HepG2 (cell line): ENCODE measurements at regions of chr3 and their contacts with region 1.

Region 1: GRCh38 chr3:123791417-123791816 is 92.7 kb downstream of the MYLK start:
- DNase-seq: no peak
- ATAC-seq: no peak
- H3K4me3 ChIP-seq: no peak overlapping the region
- H3K27ac ChIP-seq: no peak overlapping the region
- H3K4me1 ChIP-seq: peaks cover 37% of the 10 kb centered on the region
- H3K27me3 ChIP-seq: no peaks in the 10 kb centered on the region
- CTCF ChIP-seq: no peak
- EP300 ChIP-seq: no peak
- POLR2A ChIP-seq: no peak
- RAD21 ChIP-seq: no peak

Region 2: DNA sequence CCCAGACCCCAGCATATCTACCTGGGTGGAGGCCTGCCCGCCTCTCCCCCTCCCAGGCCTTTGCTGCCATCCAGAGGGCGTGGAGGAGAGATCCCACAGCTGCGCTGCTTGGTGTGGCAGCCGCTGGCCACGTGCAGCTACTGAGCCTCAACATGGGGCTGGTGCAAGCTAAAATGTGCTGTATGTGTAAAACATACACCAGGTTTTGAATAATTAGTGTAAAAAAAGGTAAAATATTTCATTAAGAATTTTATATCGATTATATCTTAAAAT is 493.9 kb before region 1 on chr3:
- CTCF ChIA-PET with region 1: no interaction called
- POLR2A ChIA-PET with region 1: no interaction called
- in situ Hi-C with region 1: no loop called
- intact Hi-C with region 1: no loop called
- DNase-seq: no peak
- ATAC-seq: peak; percentile 27; the same call in 1 of the 3 replicates
- H3K4me3 ChIP-seq: no peak overlapping the region
- H3K27ac ChIP-seq: no peak overlapping the region
- H3K4me1 ChIP-seq: no peaks in the 10 kb centered on the region
- H3K27me3 ChIP-seq: peaks cover 4 to 30% of the 10 kb centered on the region in 2 experiments; a peak in 3 of 5 replicates
- CTCF ChIP-seq: peak; percentile 65
- EP300 ChIP-seq: no peak
- POLR2A ChIP-seq: no peak
- RAD21 ChIP-seq: no peak

Region 3: GRCh38 chr3:123584988-123585937 is 206.2 kb before region 1 on chr3 and contains the start of gene HACD2:
- CTCF ChIA-PET with region 1: no interaction called
- POLR2A ChIA-PET with region 1: no interaction called
- in situ Hi-C with region 1: no loop called
- intact Hi-C with region 1: no loop called
- DNase-seq: peak; percentile 94
- ATAC-seq: peak; percentile 95
- H3K4me3 ChIP-seq: peak within 1 kb of the TSS; percentile 89 to 98 (median 91)
- H3K27ac ChIP-seq: peak within 1 kb of the TSS; percentile 97
- H3K4me1 ChIP-seq: peaks cover 45% of the 10 kb centered on the region
- H3K27me3 ChIP-seq: no peaks in the 10 kb centered on the region; a peak in 1 of 5 replicates
- CTCF ChIP-seq: no peak
- EP300 ChIP-seq: no peak
- POLR2A ChIP-seq: peak; percentile 65 to 90
- RAD21 ChIP-seq: peak; percentile 33; the same call in 1 of the 2 replicates
- total RNA-seq, gene HACD2: 36.0 and 47.0 TPM in 2 replicates

Region 4: GRCh38 chr3:123700791-123701722 is 90.4 kb before region 1 on chr3:
- CTCF ChIA-PET with region 1: no interaction called
- POLR2A ChIA-PET with region 1: no interaction called
- in situ Hi-C with region 1: no loop called
- intact Hi-C with region 1: no loop called
- DNase-seq: no peak
- ATAC-seq: no peak
- H3K4me3 ChIP-seq: no peak overlapping the region
- H3K27ac ChIP-seq: no peak overlapping the region
- H3K4me1 ChIP-seq: peaks cover 40% of the 10 kb centered on the region
- H3K27me3 ChIP-seq: no peaks in the 10 kb centered on the region
- CTCF ChIP-seq: no peak
- EP300 ChIP-seq: no peak
- POLR2A ChIP-seq: no peak
- RAD21 ChIP-seq: no peak

Region 5: GRCh38 chr3:123773681-123774431 is 17.6 kb before region 1 on chr3:
- CTCF ChIA-PET with region 1: no interaction called
- POLR2A ChIA-PET with region 1: no interaction called
- in situ Hi-C with region 1: no loop called
- intact Hi-C with region 1: loop called (anchors 1 kb)
- DNase-seq: no peak
- ATAC-seq: peak; percentile 45
- H3K4me3 ChIP-seq: no peak overlapping the region
- H3K27ac ChIP-seq: no peak overlapping the region
- H3K4me1 ChIP-seq: peaks cover 22% of the 10 kb centered on the region
- H3K27me3 ChIP-seq: no peaks in the 10 kb centered on the region
- CTCF ChIP-seq: no peak
- EP300 ChIP-seq: no peak
- POLR2A ChIP-seq: no peak
- RAD21 ChIP-seq: no peak

Region 6: GRCh38 chr3:123819949-123820348 is 28.5 kb after region 1 on chr3:
- CTCF ChIA-PET with region 1: no interaction called
- POLR2A ChIA-PET with region 1: no interaction called
- in situ Hi-C with region 1: no loop called
- intact Hi-C with region 1: no loop called
- DNase-seq: no peak
- ATAC-seq: no peak
- H3K4me3 ChIP-seq: no peak overlapping the region
- H3K27ac ChIP-seq: no peak overlapping the region
- H3K4me1 ChIP-seq: peaks cover 35% of the 10 kb centered on the region
- H3K27me3 ChIP-seq: no peaks in the 10 kb centered on the region
- CTCF ChIP-seq: no peak
- EP300 ChIP-seq: no peak
- POLR2A ChIP-seq: no peak
- RAD21 ChIP-seq: no peak